Right ventricle myocardium superior (tissue), 1 donor: ENCODE measurements at regions of chr15 and their contacts with region 1.

Region 1: GRCh38 chr15:101127506-101128076 is 124.3 kb downstream of the CHSY1 start:
- DNase-seq: peak; percentile 84
- ATAC-seq: peak; percentile 95

Region 2: DNA sequence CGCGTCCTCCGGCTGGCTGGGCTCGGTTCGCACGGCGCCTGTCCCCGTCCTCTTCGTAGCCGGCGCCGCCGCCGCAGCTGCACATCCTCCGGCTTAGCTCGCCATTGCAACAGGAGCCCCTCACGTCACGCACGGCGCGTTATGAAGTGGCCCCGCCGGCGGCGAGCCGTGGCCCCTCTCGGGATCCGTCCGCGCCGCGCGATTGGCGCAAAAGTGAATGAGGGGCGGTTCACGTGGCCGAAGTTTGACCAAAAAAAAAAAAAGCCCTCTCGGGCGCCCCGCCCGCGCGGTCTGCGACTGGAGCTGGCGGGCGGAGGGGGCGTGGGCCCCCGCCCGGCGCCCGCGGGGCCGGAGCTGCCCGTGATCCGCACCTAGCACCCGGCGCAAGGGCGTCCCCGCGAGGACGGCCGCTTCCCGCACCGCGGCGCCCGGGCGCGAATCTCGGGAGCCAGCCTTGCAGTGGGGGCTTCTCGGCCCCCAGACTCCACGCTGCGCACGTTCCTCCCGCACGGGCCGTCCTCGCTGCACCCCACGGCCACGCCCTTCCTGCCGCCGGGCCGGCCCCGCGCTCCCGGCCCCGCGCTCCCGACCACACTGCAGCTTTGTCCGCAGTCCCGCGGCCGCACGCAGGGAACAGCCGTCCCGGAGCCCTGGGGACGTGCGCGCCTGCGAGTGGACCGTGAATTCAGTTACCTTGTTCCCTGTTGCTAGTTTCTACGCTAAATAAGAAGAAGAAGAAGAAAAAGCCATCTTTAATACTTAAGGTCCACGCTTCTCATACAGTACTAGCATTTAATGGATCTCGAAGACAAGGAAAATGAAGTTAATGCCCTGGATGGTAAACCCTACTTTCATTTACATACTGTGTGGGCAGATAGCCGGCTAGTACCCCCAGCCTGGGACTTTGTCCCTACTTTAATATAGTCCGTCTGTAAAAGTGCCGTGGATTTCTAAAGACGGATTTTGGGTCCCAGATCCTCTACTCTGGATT is 124.5 kb after region 1 on chr15 and contains the start of gene CHSY1:
- intact Hi-C with region 1: loop called (anchors 10 kb)
- DNase-seq: peak; percentile 96
- ATAC-seq: peak; percentile 92
- total RNA-seq, gene CHSY1: 12.7 TPM

Region 3: DNA sequence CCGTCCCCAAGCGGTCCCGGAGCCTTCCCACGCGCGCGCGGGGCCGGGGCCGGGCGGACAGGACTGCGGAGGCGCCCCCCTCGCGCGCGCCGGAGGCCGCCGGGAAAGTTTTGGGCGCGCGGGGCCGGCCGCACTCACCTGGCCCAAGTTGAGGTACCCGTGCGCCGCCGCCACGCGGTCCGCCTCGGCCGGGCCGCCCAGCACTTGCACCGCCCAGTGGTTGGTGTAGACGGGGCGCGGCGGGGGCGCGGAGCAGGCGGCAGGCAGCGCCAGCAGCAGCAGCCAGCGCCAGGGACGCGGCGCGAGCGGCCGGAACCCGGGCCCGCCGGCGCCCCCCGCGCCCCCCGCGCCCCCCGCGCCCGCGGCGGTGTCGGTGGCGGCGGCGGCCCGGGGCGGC is 361.6 kb after region 1 on chr15:
- intact Hi-C with region 1: no loop called
- DNase-seq: peak; percentile 70
- ATAC-seq: peak; percentile 49

Region 4: DNA sequence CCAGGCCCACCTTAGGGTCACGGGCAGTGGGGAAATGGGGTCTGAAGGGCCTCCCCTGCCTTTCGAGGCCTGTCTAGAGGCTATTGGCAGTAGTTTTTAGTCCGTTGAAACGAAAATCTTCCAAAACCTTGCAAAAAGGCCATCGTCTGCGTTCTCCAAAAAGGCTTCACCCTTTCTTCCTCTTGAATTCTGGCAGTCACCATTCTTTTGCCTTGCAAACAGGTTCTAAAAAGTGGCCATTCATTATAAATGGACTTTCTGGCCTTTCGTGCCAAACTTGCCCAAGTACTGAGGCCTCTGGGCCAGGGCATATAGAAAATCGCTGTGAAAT is 597.0 kb after region 1 on chr15:
- intact Hi-C with region 1: no loop called
- DNase-seq: no peak
- ATAC-seq: no peak